Heart right ventricle (tissue), 16 donors: ENCODE measurements at regions of chr11 and their contacts with region 1.

Region 1: DNA sequence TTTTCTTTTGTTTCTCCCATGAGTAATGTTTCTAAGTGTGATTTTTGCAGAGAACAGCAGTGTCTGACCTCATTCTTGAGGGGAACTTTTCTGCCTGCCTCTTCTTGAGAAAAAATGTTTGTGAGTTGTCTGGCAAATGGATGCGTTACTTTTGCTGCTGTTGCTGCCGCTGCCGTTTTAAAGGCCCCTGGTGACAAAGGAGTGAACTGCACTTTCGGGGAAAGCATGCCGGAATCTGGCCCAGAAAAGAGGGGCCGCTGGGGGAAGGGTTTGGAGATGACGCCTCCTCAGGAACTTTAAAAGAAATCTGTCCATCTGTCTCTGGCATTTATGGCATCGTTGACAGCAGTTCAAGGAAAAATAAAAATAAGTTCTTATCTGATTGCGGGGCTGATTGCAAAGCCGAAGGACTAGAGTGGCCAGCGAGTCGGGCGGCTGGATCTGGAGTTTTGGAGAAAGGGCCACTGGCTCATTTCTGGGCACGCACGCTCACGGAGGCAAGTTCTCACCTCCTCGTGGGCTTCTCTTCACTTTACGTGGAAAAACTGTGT is 16.5 kb downstream of the ZBTB16 start:
- DNase-seq: peak in 1 of 2 donors; percentile 71
- ATAC-seq: peak in 4 of 8 donors; percentile 1 to 31 (median 20)
- H3K4me3 ChIP-seq: peak overlapping the region in 3 of 10 donors; percentile 10 to 20 (median 11)
- H3K27ac ChIP-seq: peak overlapping the region in 8 of 10 donors; percentile 33 to 90 (median 78)
- H3K4me1 ChIP-seq: peaks cover 56 to 100% (median 100%) of the 10 kb centered on the region in 9 donors
- H3K27me3 ChIP-seq: no peaks in the 10 kb centered on the region
- CTCF ChIP-seq: peak; percentile 53 to 74 (median 66)

Region 2: GRCh38 chr11:112588252-112588694 is 1487.7 kb before region 1 on chr11:
- intact Hi-C with region 1: no loop called
- DNase-seq: peak; percentile 38 to 64
- ATAC-seq: peak; percentile 52 to 87 (median 82)
- H3K4me3 ChIP-seq: no peak overlapping the region
- H3K27ac ChIP-seq: no peak overlapping the region
- H3K4me1 ChIP-seq: peaks cover 0 to 11% (median 0%) of the 10 kb centered on the region in 9 donors
- H3K27me3 ChIP-seq: peaks cover 0 to 4% (median 0%) of the 10 kb centered on the region in 7 donors
- CTCF ChIP-seq: peak; percentile 54 to 84 (median 73)

Region 3: DNA sequence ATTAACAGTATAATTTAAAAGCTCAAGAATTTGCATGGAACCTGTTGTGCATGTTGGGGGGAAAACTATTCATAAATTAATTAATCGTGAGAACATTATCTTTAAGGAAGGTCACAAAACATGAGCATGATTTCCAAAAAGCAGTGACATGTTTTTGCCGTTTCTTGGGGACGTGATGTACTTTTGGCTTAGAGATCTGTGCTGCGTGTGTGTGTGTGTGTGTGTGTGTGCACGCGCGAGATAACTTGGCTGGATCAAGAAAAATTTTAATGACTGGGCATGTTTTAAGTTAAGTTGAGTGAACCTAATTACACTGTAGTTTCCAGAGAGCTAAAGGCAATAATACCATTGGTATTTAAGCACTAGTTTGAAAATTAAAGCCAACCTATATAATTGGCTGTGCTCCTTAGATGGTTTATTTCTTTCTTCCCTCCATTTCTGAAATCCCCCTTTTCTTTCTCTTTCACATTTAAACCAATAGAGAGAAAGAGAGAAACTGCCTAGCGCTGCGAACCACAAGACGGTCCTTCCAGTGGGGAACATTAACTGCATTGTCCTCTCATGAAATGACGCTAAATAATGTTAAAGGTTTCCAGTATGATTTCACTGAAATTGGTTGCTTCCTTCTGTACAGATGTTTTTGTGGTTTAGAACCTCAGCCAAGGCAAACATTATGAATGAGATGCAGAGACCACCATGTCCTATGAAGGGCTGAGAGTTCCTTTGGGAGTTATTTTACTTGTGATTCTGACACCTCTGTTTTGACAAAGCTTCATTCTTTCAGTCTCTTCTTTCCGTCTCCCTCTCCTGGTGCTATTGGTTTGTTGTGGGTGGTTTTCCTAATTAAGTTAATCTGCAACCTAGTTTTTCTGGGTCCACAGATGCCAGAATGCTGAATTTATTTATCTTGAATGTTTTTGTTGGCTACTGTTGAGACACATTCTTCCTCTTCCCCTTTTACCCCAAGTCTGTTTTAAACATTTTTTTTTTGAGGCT is 35.3 kb after region 1 on chr11:
- intact Hi-C with region 1: loop called in 2 of 10 experiments (anchors 5 kb)
- DNase-seq: peak; percentile 40 to 58
- ATAC-seq: peak in 7 of 8 donors; percentile 35 to 72 (median 57)
- H3K4me3 ChIP-seq: peak overlapping the region in 8 of 10 donors; percentile 3 to 40 (median 32)
- H3K27ac ChIP-seq: peak overlapping the region; percentile 50 to 85 (median 75)
- H3K4me1 ChIP-seq: peaks cover 34 to 97% (median 85%) of the 10 kb centered on the region in 9 donors
- H3K27me3 ChIP-seq: no peaks in the 10 kb centered on the region
- CTCF ChIP-seq: peak in 2 of 9 donors; percentile 17 to 19

Region 4: GRCh38 chr11:114121804-114122504 is 46.0 kb after region 1 on chr11:
- intact Hi-C with region 1: loop called in 2 of 10 experiments (anchors 5 kb)
- DNase-seq: no peak
- ATAC-seq: peak in 2 of 8 donors; percentile 22 to 23
- H3K4me3 ChIP-seq: no peak overlapping the region
- H3K27ac ChIP-seq: peak overlapping the region in 5 of 10 donors; percentile 12 to 60 (median 29)
- H3K4me1 ChIP-seq: peaks cover 32 to 94% (median 89%) of the 10 kb centered on the region in 9 donors
- H3K27me3 ChIP-seq: no peaks in the 10 kb centered on the region
- CTCF ChIP-seq: no peak

Region 5: GRCh38 chr11:114166897-114167323 is 90.9 kb after region 1 on chr11:
- intact Hi-C with region 1: loop called in 2 of 10 experiments (anchors 5 kb)
- DNase-seq: no peak
- ATAC-seq: peak in 4 of 8 donors; percentile 6 to 28 (median 15)
- H3K4me3 ChIP-seq: peak overlapping the region in 5 of 10 donors; percentile 1 to 7 (median 4)
- H3K27ac ChIP-seq: peak overlapping the region; percentile 74 to 100 (median 97)
- H3K4me1 ChIP-seq: peaks cover 82 to 99% (median 95%) of the 10 kb centered on the region in 9 donors
- H3K27me3 ChIP-seq: no peaks in the 10 kb centered on the region
- CTCF ChIP-seq: no peak